Cardiac septum (tissue), 1 donor: ENCODE measurements at regions of chr3 and their contacts with region 1.

Region 1: DNA sequence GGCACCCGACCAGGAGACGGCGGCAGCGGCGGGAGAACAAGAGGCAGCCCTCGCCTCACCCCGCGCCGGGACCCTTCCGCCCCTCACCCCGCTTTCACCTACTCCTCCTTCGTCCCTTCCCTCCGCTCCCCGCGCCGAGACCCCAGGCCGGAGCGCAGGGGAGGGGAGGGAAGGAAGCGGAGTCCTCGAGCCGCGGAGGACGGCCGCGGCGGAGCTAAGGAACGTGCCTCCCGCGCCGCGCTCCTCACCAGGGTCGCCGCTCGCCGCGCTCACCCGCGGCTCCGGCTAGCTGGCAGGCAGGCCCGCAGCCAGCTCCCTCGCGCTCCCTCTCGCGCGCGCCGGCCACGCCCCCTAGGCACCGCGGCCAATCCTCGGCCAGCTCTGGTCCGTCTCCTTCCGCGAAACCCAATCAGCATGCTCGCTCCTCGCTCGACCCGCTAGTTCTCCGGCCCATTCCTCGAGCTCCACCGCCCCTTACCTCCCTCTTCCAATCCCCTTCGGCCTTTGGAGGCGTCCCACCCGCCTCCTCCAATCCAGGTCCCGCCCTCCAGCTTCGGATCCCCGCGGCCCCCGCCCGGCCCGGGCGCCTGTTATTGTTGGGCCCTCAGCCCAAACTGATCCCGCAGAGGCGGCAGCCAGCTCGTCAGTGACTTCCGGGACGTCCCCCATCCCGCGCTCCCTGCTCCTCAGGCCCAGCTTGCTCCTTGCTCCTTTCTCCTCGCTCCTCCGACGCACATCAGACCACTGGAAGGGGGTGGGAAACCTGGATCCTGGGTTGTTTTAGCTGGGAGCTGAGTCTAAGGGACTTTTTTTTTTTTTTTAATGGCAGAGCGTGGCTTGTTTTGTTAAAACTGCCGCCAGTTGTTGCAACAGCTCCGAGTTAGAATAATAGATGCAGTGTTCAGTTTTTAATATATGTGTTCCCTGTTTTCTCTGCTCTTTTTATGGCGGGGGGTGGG is at the start of gene DCBLD2:
- DNase-seq: peak; percentile 98
- total RNA-seq, gene DCBLD2: 67.7 TPM

Region 2: GRCh38 chr3:98522244-98523090 is 379.2 kb before region 1 on chr3 and contains the start of gene CLDND1:
- intact Hi-C with region 1: loop called (anchors 5 kb)
- DNase-seq: peak; percentile 99
- total RNA-seq, gene CLDND1: 80.8 TPM

Region 3: DNA sequence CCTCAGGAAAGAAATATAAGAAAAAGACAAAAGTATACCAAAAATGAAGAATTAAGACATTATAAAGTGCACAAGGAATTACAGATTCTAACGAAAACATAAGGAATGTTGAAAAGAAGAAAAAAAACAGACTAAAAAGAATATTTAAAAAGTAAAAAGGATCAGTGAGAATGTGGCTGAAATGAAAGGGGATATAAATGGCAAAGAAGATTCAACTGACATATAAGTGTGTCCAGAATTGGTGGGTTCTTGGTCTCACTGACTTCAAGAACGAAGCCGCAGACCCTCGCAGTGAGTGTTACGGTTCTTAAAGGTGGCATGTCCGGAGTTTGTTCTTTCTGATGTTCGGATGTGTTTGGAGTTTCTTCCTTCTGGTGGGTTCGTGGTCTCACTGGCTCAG is 44.9 kb before region 1 on chr3:
- intact Hi-C with region 1: no loop called
- DNase-seq: no peak

Region 4: GRCh38 chr3:98980915-98981596 is 79.4 kb after region 1 on chr3:
- intact Hi-C with region 1: loop called (anchors 5 kb)
- DNase-seq: no peak

Region 5: DNA sequence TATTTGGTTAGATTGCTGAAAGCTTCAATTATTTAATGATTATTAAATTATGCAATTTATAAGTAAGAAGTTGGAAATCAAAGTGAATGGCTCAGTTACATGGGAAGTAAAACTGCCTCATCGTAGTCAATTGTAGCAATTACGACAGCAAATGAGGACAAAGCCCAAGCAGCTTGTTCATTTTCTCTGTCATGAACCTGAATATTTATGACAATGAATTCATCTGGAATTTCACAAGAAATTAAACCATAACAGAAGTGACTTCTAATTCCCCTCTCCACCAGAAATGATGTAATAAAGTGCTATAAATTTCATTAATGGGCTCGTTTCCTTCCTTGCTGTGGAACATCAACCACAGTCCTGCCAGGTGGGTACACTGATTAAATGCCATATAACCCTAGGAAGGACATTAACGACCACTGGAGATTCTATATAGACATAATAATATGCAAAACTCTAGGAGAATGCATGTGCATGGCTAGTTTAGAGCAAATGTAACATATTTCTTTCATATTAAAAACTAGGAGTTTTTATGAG is 273.7 kb after region 1 on chr3:
- intact Hi-C with region 1: no loop called
- DNase-seq: no peak